ENCODE measurements at regions of chr3 and their contacts with region 1.

Region 1: DNA sequence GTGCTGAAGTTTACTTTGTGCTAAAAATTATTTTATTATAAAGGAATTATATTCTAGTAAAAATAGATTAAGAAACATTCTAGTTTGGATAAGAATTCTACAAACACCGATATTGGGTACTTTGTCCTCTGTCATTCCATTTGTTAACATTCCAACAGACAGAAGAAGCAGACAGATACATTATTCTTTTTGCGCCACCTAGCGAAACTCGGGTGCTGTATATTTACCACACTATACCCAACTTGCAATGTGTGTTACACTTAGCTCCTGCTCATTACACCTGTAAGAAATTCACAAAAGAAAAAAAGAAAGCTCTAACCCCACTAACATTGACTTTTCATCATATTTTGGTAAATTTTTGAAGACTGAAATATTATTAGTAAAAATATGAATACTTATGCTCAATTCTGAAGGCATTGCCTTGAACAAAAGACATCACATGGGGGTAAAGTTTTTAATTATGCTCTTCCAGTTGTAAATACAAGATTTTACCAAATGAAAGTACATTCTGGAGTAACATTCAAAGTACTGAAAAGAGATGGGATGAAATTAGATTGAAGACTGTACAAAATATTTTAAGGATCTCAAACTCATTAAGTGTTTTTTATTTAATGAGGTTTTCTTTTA is 136.5 kb upstream of the MLF1 start:
- DNase-seq: peak; percentile 81
- H3K4me3 Mint-ChIP-seq: no peak overlapping the region
- H3K27ac Mint-ChIP-seq: no peak overlapping the region
- H3K4me1 Mint-ChIP-seq: peaks cover 19% of the 10 kb centered on the region
- H3K27me3 Mint-ChIP-seq: no peaks in the 10 kb centered on the region
- CTCF ChIP-seq: peak; percentile 90

Region 2: DNA sequence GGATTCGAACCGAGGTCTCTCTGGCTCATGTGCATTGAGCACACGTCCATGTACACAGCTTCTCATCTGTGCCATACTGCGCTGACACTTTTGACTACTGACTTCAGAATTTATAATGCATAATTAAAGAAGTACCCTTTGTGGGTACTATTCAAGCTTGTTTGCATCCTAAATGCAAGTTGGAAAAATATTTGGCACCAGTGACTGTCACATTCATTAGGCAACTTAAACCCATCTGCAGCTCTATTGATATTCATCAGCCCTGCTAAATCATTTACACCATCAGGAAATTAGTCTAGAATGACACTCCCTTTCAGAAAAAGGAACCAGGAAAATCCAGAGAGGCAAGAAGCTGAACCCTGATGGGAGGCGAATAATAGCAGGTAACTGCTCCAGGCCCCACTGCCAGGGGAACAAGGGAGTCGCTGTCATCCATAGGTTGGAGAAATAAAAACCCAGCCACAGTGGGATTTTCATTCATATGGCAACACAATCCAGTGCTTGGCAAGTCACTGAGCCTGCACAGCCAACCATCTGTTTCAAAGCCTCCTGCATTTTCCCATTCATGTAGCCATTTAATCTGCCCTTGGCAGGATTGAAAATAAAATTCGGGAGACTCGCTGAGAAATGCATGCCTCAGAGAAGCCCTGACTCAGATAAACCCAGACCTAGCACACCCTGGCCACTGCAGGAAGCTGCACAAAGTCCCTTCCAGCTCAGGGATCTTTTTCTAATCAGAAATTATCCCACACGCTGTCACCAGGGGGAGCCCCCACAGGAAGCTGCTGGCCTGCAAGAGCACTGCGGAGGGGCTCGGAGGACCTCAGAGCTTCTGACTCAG is 828.3 kb before region 1 on chr3:
- CTCF ChIA-PET with region 1: interaction called, 16 read pairs
- intact Hi-C with region 1: no loop called
- DNase-seq: peak; percentile 95
- H3K4me3 Mint-ChIP-seq: peak overlapping the region; percentile 26
- H3K27ac Mint-ChIP-seq: no peak overlapping the region
- H3K4me1 Mint-ChIP-seq: peaks cover 11% of the 10 kb centered on the region
- H3K27me3 Mint-ChIP-seq: no peaks in the 10 kb centered on the region
- CTCF ChIP-seq: peak; percentile 97

Region 3: GRCh38 chr3:157767602-157768001 is 666.9 kb before region 1 on chr3:
- CTCF ChIA-PET with region 1: no interaction called
- intact Hi-C with region 1: loop called (anchors 10 kb)
- DNase-seq: no peak
- H3K4me3 Mint-ChIP-seq: no peak overlapping the region
- H3K27ac Mint-ChIP-seq: no peak overlapping the region
- H3K4me1 Mint-ChIP-seq: no peaks in the 10 kb centered on the region
- H3K27me3 Mint-ChIP-seq: no peaks in the 10 kb centered on the region
- CTCF ChIP-seq: no peak

Region 4: GRCh38 chr3:157938154-157938779 is 496.3 kb before region 1 on chr3:
- CTCF ChIA-PET with region 1: no interaction called
- intact Hi-C with region 1: loop called (anchors 5 kb)
- DNase-seq: no peak
- H3K4me3 Mint-ChIP-seq: no peak overlapping the region
- H3K27ac Mint-ChIP-seq: no peak overlapping the region
- H3K4me1 Mint-ChIP-seq: no peaks in the 10 kb centered on the region
- H3K27me3 Mint-ChIP-seq: no peaks in the 10 kb centered on the region
- CTCF ChIP-seq: no peak

Region 5: DNA sequence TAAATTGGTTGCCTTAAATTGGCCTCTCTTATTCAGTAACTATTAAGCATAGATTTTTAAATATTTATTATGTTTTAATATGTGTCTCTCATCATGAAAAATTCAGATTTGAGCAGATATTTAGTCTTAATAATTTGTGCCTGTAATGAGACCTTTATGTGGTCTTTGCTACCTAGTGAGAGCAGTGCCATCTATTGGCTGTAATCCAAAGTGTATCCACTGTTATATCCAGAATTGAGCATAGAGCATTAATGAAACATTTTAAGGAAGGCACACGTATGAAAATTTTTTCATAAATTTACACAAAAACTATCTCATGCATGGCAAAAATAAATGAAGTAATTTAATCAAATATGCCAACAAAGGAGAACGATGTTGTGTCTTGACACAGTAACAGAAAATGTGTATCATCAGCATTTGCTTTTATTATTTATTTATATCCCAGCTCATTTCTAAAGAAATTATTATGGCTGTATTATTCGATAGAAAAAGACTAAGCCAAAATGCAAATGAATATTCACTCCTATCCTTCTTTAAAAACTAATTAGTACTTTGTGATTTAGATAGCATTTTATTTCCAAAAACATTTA is 121.1 kb before region 1 on chr3:
- CTCF ChIA-PET with region 1: interaction called, 3 read pairs
- intact Hi-C with region 1: loop called (anchors 5 kb)
- DNase-seq: peak; percentile 29
- H3K4me3 Mint-ChIP-seq: no peak overlapping the region
- H3K27ac Mint-ChIP-seq: no peak overlapping the region
- H3K4me1 Mint-ChIP-seq: no peaks in the 10 kb centered on the region
- H3K27me3 Mint-ChIP-seq: no peaks in the 10 kb centered on the region
- CTCF ChIP-seq: peak; percentile 42

Region 6: DNA sequence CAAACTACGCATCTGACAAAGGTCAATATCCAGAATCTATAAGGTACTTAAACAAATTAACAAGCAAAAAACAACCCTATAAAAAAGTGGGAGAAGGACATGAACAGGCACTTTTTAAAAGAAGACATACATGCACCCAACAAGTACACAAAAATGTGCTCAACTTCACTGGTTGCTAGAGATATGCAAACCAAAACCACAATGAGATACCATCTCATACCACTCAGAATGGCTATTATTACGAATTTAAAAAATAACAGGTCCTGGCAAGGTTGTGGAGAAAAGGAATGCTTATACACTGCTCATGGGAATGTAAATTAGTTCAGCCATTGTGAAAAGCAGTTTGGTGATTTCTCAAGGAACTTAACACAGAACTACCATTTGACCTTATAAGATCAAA is 39.1 kb before region 1 on chr3:
- CTCF ChIA-PET with region 1: no interaction called
- intact Hi-C with region 1: no loop called
- DNase-seq: no peak
- H3K4me3 Mint-ChIP-seq: no peak overlapping the region
- H3K27ac Mint-ChIP-seq: no peak overlapping the region
- H3K4me1 Mint-ChIP-seq: no peaks in the 10 kb centered on the region
- H3K27me3 Mint-ChIP-seq: no peaks in the 10 kb centered on the region
- CTCF ChIP-seq: no peak